ENCODE measurements at regions of chr12 and their contacts with region 1.

Region 1: DNA sequence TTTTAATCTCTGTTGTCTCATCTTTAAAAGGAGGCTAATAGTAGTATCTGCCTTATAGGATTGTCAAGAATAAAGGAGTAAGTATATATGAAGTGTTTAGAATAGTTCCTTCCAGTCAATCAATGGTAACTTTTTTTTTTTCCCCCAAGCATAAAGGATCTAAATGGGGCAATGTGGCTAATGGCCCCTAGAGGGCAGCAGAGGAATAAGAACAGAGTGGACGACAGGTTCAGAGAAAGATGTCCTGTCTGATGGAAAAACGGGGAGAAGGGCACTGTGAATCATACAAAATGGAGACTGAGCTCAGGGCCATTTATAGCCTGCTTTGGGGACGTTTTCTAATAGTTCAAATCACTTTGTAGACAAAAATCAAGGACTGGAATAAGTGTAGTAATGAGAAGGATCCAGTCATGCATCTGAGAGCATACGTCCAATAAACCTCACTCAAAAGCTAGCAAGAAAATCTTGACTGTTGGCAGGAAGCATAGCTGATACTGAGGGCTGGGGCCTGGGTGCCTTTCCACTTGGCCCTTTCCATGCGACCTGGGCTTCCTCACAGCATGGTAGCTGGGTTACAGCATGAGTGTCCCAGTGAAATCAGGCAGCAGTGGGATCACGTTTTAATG is 51.3 kb downstream of the IFNG-AS1 start:
- DNase-seq: peak; percentile 76
- ATAC-seq: peak; percentile 72
- H3K4me3 Mint-ChIP-seq: no peak overlapping the region
- H3K27ac Mint-ChIP-seq: no peak overlapping the region
- H3K4me1 Mint-ChIP-seq: peaks cover 45% of the 10 kb centered on the region
- H3K27me3 Mint-ChIP-seq: no peaks in the 10 kb centered on the region

Region 2: DNA sequence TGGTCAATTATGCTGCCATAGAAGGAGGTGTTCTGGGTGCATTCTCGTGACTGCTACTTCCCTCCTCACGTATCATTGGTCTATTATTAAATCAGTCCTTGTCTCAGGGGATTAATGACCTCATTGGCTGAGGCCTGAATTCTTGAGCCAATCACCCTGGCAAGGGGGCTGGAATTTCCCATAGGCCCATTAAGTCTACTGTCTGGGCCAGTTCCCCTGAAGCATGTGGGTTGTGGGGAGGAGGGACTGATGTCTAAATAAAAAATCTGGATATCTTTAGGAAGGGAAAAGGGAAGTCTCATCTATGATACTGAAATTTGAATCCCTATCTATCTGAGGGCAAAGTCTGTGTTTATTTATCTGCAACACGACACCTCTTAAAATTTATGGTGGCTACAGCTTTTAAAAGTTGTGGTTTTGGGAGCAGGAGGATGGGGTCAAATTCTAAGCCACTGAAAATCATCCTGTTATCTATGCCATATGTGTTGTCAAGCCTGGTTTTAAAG is 320.2 kb before region 1 on chr12:
- CTCF ChIA-PET with region 1: no interaction called
- POLR2A ChIA-PET with region 1: no interaction called
- DNase-seq: no peak
- ATAC-seq: no peak
- H3K4me3 Mint-ChIP-seq: no peak overlapping the region
- H3K27ac Mint-ChIP-seq: no peak overlapping the region
- H3K4me1 Mint-ChIP-seq: no peaks in the 10 kb centered on the region
- H3K27me3 Mint-ChIP-seq: no peaks in the 10 kb centered on the region

Region 3: GRCh38 chr12:68001486-68002466 is 38.8 kb before region 1 on chr12:
- CTCF ChIA-PET with region 1: interaction called, 12 read pairs
- POLR2A ChIA-PET with region 1: no interaction called
- DNase-seq: no peak
- ATAC-seq: no peak
- H3K4me3 Mint-ChIP-seq: no peak overlapping the region
- H3K27ac Mint-ChIP-seq: no peak overlapping the region
- H3K4me1 Mint-ChIP-seq: peaks cover 11% of the 10 kb centered on the region
- H3K27me3 Mint-ChIP-seq: no peaks in the 10 kb centered on the region

Region 4: GRCh38 chr12:68074306-68075027 is 33.9 kb after region 1 on chr12:
- CTCF ChIA-PET with region 1: interaction called, 11 read pairs
- POLR2A ChIA-PET with region 1: no interaction called
- DNase-seq: no peak
- ATAC-seq: no peak
- H3K4me3 Mint-ChIP-seq: no peak overlapping the region
- H3K27ac Mint-ChIP-seq: no peak overlapping the region
- H3K4me1 Mint-ChIP-seq: peaks cover 18% of the 10 kb centered on the region
- H3K27me3 Mint-ChIP-seq: no peaks in the 10 kb centered on the region

Region 5: DNA sequence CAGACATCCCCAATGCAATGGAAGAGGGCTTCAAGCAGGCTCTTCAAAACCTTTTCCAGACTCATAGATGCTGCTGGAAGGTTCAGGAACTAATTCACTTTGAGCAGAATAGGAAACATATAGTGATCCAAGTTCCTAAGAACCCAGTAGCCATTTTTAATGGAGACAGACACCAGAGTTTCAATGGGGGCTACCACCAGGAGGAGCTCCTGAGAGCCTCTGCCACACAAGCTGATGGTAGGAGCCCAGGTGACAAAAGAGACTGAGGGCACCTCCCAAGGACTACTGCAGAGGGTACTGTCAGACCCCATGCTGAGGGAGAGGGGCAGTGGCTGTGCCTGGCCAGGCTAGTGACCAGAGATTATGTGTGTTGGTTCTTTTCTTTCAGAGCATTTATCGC is 73.1 kb after region 1 on chr12:
- CTCF ChIA-PET with region 1: interaction called, 70 read pairs
- POLR2A ChIA-PET with region 1: no interaction called
- DNase-seq: peak; percentile 53
- ATAC-seq: peak; percentile 68
- H3K4me3 Mint-ChIP-seq: no peak overlapping the region
- H3K27ac Mint-ChIP-seq: no peak overlapping the region
- H3K4me1 Mint-ChIP-seq: peaks cover 38% of the 10 kb centered on the region
- H3K27me3 Mint-ChIP-seq: no peaks in the 10 kb centered on the region

Region 6: DNA sequence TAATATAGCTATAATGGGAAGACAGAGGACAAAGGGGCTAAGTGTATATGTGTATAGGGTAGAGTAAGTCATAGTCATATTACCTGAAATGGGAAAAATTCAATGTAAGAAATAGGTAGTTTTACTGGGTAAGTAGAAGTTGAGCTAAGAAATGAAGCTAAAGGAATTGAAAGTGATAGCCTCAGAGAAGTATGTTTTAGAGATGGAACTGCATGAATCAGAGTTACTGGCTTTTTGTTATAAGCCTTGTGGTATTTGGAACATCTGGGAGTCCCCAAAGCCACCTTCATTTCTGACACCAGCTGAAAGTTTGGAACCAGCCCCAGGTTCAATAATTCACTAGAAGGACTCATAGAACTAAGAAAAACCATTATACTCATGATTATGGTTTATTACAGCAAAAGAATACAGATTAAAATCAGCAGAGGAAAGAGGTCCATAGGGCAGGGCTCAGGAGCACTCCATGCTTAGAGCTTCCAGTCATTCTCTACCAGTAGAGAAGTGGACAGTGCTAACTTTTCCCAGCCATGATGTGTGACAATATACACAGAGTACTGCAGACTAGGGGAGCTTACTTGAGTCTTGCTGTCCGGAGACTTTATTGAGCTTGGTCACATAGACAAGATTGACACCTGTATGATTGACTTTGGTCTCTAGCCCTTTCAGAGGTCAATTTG is 128.8 kb after region 1 on chr12:
- CTCF ChIA-PET with region 1: interaction called, 16 read pairs
- POLR2A ChIA-PET with region 1: no interaction called
- DNase-seq: no peak
- ATAC-seq: no peak
- H3K4me3 Mint-ChIP-seq: no peak overlapping the region
- H3K27ac Mint-ChIP-seq: no peak overlapping the region
- H3K4me1 Mint-ChIP-seq: peaks cover 7% of the 10 kb centered on the region
- H3K27me3 Mint-ChIP-seq: no peaks in the 10 kb centered on the region

Region 7: GRCh38 chr12:68180792-68181744 is 140.5 kb after region 1 on chr12:
- CTCF ChIA-PET with region 1: interaction called, 26 read pairs
- POLR2A ChIA-PET with region 1: interaction called, 3 read pairs
- DNase-seq: peak; percentile 76
- ATAC-seq: peak; percentile 93
- H3K4me3 Mint-ChIP-seq: peak overlapping the region; percentile 15
- H3K27ac Mint-ChIP-seq: peak overlapping the region; percentile 80
- H3K4me1 Mint-ChIP-seq: peaks cover 55% of the 10 kb centered on the region
- H3K27me3 Mint-ChIP-seq: no peaks in the 10 kb centered on the region

Region 8: GRCh38 chr12:68317047-68317667 is 276.6 kb after region 1 on chr12:
- CTCF ChIA-PET with region 1: interaction called, 46 read pairs
- POLR2A ChIA-PET with region 1: no interaction called
- DNase-seq: peak; percentile 72
- ATAC-seq: no peak
- H3K4me3 Mint-ChIP-seq: no peak overlapping the region
- H3K27ac Mint-ChIP-seq: no peak overlapping the region
- H3K4me1 Mint-ChIP-seq: no peaks in the 10 kb centered on the region
- H3K27me3 Mint-ChIP-seq: no peaks in the 10 kb centered on the region

Measured in activated CD8-positive, alpha-beta T cell treated with anti-CD3 and anti-CD28 coated beads, Interleukin-2, amount 10 ng/mL, durations not matched to agents 7 days and 5 days (primary cell).